ENCODE measurements at regions of chr6 and their contacts with region 1.

Region 1: GRCh38 chr6:46419576-46420002 is 71.7 kb downstream of the RCAN2 start:
- DNase-seq: peak in 1 of 3 donors; percentile 89
- ATAC-seq: peak; percentile 56
- H3K4me3 ChIP-seq: no peak overlapping the region
- H3K4me1 ChIP-seq: no peaks in the 10 kb centered on the region
- CTCF ChIP-seq: peak; percentile 40

Region 2: GRCh38 chr6:46090115-46091079 is 329.2 kb before region 1 on chr6:
- intact Hi-C with region 1: loop called in 1 of 2 experiments (anchors 10 kb)
- DNase-seq: peak; percentile 50 to 77 (median 55)
- ATAC-seq: peak; percentile 83
- H3K4me3 ChIP-seq: no peak overlapping the region
- H3K4me1 ChIP-seq: no peaks in the 10 kb centered on the region
- CTCF ChIP-seq: peak; percentile 53

Region 3: DNA sequence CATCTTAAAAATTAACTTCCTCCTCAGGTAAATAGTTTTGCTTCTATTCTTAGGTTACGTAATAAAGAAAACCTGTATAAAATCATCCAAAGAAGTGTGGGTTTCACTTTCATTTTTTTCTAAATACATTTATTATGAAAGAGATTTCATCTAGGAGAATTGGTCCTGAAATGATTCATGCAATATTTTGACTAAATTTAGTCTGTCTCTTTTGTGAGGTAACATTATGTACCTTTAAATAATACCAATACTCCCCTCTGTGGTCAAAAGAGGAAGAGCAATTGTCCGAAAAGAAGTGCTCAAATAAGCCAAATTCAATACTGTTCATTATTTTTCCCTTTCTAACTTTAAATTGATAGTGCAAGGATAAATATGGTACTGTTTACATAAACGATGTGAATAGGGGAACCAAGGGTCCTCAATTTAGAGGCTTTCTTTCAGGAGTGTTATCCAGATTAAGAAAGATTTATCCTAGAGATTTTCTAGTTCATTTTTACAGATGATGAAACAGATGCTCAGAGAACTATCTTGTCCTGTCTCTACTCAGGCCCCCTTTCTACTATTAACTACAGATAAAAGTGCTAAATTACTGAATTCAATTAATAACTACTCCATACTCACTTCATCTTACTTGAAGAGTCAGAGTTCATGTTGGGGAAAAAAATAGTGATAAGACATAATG is 206.8 kb after region 1 on chr6:
- intact Hi-C with region 1: loop called (anchors 5 to 10 kb)
- DNase-seq: peak in 1 of 3 donors; percentile 40
- ATAC-seq: no peak
- H3K4me3 ChIP-seq: no peak overlapping the region
- H3K4me1 ChIP-seq: peaks cover 4% of the 10 kb centered on the region
- CTCF ChIP-seq: peak; percentile 25

Region 4: GRCh38 chr6:46637145-46637544 is 217.6 kb after region 1 on chr6:
- intact Hi-C with region 1: loop called in 1 of 2 experiments (anchors 10 kb)
- DNase-seq: no peak
- ATAC-seq: peak; percentile 38
- H3K4me3 ChIP-seq: no peak overlapping the region
- H3K4me1 ChIP-seq: peaks cover 3% of the 10 kb centered on the region
- CTCF ChIP-seq: no peak